MCF 10A (cell line): ENCODE measurements at regions of chr11 and their contacts with region 1.

Region 1: GRCh38 chr11:85941380-85941973 is 86.3 kb downstream of the CCDC83 start:
- DNase-seq: peak; percentile 64
- H3K4me3 Mint-ChIP-seq: no peak overlapping the region
- H3K27ac Mint-ChIP-seq: no peak overlapping the region
- H3K4me1 Mint-ChIP-seq: peaks cover 1% of the 10 kb centered on the region
- H3K27me3 Mint-ChIP-seq: no peaks in the 10 kb centered on the region
- CTCF ChIP-seq: peak; percentile 57

Region 2: GRCh38 chr11:85694386-85694980 is 247.0 kb before region 1 on chr11:
- CTCF ChIA-PET with region 1: no interaction called
- POLR2A ChIA-PET with region 1: no interaction called
- intact Hi-C with region 1: loop called (anchors 10 kb)
- DNase-seq: peak; percentile 45
- H3K4me3 Mint-ChIP-seq: no peak overlapping the region
- H3K27ac Mint-ChIP-seq: no peak overlapping the region
- H3K4me1 Mint-ChIP-seq: no peaks in the 10 kb centered on the region
- H3K27me3 Mint-ChIP-seq: peaks cover 16% of the 10 kb centered on the region
- CTCF ChIP-seq: peak; percentile 45

Region 3: GRCh38 chr11:86124834-86125233 is 183.4 kb after region 1 on chr11:
- CTCF ChIA-PET with region 1: no interaction called
- POLR2A ChIA-PET with region 1: no interaction called
- intact Hi-C with region 1: no loop called
- DNase-seq: no peak
- H3K4me3 Mint-ChIP-seq: no peak overlapping the region
- H3K27ac Mint-ChIP-seq: no peak overlapping the region
- H3K4me1 Mint-ChIP-seq: no peaks in the 10 kb centered on the region
- H3K27me3 Mint-ChIP-seq: no peaks in the 10 kb centered on the region
- CTCF ChIP-seq: no peak

Region 4: DNA sequence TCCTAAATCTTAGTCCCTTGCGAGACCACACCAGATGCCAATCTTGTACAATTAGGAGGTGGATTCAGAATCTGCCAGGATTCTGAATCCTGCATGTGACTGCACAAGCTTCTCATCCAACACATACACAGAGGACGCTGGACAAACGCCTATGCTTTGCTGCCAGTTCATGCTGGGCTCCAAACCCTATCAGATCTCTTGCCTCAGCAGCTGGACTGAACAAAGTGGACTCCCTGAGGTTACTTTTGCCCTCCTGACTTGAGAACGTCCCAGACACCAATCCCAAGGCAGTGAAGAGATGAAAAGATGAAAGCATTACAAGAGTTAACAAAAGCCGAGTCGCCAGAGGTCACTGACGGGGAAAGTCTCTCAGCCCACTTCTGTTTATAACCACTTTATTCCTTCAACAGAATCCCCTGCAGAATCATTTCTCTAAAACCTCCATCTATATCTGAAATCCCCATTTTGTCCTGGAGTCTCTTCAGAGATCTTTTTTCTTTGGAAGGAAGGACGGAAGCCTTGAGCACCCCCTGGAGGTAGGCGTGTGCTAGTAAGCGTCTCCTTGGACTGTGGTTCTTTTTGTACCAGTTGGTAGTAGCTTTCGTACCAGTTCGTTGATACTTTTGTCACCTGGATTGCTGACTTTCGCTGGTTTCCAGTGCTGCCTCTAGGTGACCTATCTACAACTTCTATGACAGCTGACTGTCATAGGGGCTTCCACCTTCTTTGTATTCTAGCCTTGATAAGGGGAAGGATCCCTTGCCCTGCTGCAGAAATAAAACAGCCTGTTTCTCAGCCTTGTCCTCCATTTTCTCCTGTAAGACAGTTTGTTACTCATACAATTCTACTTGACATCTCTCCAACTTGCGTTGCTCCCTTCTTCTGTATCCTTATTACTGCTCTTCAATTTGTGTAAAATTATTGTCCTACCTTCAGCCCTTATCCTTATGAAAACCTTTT is 276.9 kb after region 1 on chr11:
- CTCF ChIA-PET with region 1: interaction called, 4 read pairs
- POLR2A ChIA-PET with region 1: no interaction called
- intact Hi-C with region 1: loop called (anchors 1 kb)
- DNase-seq: peak; percentile 79
- H3K4me3 Mint-ChIP-seq: no peak overlapping the region
- H3K27ac Mint-ChIP-seq: no peak overlapping the region
- H3K4me1 Mint-ChIP-seq: peaks cover 6% of the 10 kb centered on the region
- H3K27me3 Mint-ChIP-seq: no peaks in the 10 kb centered on the region
- CTCF ChIP-seq: peak; percentile 81

Region 5: GRCh38 chr11:86291466-86292262 is 350.2 kb after region 1 on chr11:
- CTCF ChIA-PET with region 1: interaction called, 3 read pairs
- POLR2A ChIA-PET with region 1: no interaction called
- intact Hi-C with region 1: loop called (anchors 1 kb)
- DNase-seq: peak; percentile 77
- H3K4me3 Mint-ChIP-seq: no peak overlapping the region
- H3K27ac Mint-ChIP-seq: no peak overlapping the region
- H3K4me1 Mint-ChIP-seq: peaks cover 6% of the 10 kb centered on the region
- H3K27me3 Mint-ChIP-seq: no peaks in the 10 kb centered on the region
- CTCF ChIP-seq: peak; percentile 78

Region 6: GRCh38 chr11:86608251-86608799 is 666.8 kb after region 1 on chr11:
- CTCF ChIA-PET with region 1: no interaction called
- POLR2A ChIA-PET with region 1: no interaction called
- intact Hi-C with region 1: no loop called
- DNase-seq: peak; percentile 82
- H3K4me3 Mint-ChIP-seq: no peak overlapping the region
- H3K27ac Mint-ChIP-seq: no peak overlapping the region
- H3K4me1 Mint-ChIP-seq: peaks cover 20% of the 10 kb centered on the region
- H3K27me3 Mint-ChIP-seq: no peaks in the 10 kb centered on the region
- CTCF ChIP-seq: peak; percentile 89

Region 7: DNA sequence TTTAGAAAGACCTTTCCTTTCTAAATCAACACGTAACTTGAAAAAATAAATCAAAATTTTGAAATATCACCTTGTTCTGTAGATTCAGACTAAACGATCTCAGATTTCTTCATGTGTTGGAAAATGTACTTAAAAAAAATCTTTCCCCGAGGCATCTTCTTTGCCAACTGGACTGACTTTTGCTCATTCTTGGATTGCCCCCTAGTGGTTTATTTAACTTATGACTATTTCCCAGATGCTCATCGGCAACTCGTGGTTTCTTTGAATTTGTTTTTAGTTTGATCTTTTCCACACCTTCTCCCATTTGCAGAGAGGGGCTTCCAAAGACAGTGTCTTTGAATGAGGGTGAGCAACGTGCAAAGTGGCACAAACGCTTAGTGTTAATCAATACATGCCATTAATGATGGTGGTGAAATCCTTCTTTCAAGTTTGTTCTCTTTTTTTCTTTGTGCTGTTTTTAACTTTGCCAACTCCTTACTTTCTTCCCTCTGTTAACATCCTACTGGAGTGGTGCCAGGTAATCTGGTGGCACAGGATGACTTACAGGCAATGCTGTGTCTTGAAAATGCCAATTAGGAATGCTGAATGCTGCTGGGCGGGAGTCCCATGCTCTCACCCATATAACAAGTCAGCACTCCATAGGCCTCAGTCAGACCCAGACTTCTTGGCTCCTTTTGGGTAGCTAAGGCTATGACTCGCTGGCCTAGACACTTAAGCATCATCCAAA is 877.2 kb after region 1 on chr11:
- CTCF ChIA-PET with region 1: no interaction called
- POLR2A ChIA-PET with region 1: no interaction called
- intact Hi-C with region 1: loop called (anchors 10 kb)
- DNase-seq: peak; percentile 75
- H3K4me3 Mint-ChIP-seq: no peak overlapping the region
- H3K27ac Mint-ChIP-seq: no peak overlapping the region
- H3K4me1 Mint-ChIP-seq: peaks cover 21% of the 10 kb centered on the region
- H3K27me3 Mint-ChIP-seq: no peaks in the 10 kb centered on the region
- CTCF ChIP-seq: peak; percentile 59